ENCODE measurements at regions of chr4 and their contacts with region 1.

Region 1: GRCh38 chr4:15963001-15963451 is at the start of gene FGFBP2:
- DNase-seq: peak; percentile 5
- H3K4me3 ChIP-seq: no peak within 1 kb of the TSS
- CTCF ChIP-seq: peak; percentile 79

Region 2: GRCh38 chr4:15778289-15779241 is 184.5 kb before region 1 on chr4 and contains the start of gene CD38:
- CTCF ChIA-PET with region 1: no interaction called
- POLR2A ChIA-PET with region 1: no interaction called
- DNase-seq: no peak
- H3K4me3 ChIP-seq: peak within 1 kb of the TSS; percentile 51
- CTCF ChIP-seq: no peak

Region 3: DNA sequence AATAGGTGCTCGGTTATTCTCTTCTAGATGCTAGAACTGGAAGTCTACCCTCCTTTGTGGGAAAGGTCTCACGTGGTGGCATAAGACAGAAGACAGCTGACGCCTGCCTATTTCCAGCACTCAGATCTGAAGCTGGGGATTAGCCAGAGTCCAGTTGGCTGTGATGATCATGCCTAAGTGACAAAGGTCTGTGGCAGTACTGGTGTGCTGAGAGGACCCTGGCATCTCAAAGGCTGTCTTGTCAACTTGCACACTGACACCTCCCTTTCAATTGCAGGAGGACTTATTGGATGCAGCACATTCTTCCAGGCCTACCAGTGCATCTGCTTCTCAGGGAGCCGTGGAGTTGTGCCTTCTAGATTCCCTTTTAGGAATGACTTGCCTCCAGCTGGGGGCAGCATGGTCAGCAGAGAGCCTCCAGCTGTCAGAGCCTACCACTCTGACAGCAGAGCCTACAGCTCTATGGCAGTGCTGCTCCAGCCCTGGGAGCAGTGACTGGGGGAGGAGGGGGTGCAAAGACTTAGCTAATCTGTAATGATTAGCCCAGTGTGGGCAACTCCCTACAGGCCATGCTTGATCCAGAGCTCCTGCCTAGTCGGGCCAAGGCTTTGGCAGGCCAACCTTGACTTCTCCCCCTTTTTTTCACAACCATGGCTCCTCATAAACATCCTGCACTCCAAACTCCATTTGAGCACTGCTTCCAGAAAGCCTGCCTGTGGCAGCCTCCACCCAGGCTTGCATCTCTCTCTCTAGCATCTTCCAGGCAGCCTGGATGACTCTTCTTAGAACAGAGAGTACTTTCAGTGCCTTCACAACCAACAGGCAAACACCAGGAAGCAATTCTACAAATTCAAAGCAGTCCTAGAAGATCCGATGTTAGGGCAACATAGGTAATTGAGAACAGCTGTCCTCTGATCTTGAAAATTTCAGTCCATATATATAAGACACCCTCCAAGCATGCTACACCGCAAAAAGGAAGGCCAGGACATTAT is 13.7 kb after region 1 on chr4:
- CTCF ChIA-PET with region 1: interaction called, 13 read pairs
- POLR2A ChIA-PET with region 1: no interaction called
- DNase-seq: no peak
- H3K4me3 ChIP-seq: no peak overlapping the region
- CTCF ChIP-seq: no peak

Region 4: DNA sequence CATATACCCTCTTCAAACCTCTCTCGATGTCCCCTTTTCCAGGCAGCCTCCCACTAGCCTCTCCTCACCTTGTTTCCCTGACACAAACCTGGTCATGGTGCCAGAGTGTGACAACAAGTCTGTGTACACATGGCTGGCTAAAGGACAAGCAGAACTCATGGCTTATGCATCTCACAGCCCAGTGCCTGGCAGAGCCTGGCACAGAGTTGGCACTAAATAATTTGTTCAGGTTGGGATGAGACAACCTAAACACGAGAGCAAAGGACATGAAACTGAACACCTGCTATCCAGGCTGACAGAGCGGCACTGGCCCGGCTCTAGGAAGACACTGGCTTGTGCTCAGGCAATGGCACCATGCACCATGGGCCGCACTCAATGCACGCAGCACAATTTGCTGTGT is 48.1 kb after region 1 on chr4:
- CTCF ChIA-PET with region 1: no interaction called
- POLR2A ChIA-PET with region 1: no interaction called
- DNase-seq: no peak
- H3K4me3 ChIP-seq: no peak overlapping the region
- CTCF ChIP-seq: no peak